ENCODE measurements at regions of chr2 and their contacts with region 1.

Region 1: GRCh38 chr2:64767670-64768468 is 114.2 kb upstream of the SERTAD2 start:
- DNase-seq: peak; percentile 96

Region 2: DNA sequence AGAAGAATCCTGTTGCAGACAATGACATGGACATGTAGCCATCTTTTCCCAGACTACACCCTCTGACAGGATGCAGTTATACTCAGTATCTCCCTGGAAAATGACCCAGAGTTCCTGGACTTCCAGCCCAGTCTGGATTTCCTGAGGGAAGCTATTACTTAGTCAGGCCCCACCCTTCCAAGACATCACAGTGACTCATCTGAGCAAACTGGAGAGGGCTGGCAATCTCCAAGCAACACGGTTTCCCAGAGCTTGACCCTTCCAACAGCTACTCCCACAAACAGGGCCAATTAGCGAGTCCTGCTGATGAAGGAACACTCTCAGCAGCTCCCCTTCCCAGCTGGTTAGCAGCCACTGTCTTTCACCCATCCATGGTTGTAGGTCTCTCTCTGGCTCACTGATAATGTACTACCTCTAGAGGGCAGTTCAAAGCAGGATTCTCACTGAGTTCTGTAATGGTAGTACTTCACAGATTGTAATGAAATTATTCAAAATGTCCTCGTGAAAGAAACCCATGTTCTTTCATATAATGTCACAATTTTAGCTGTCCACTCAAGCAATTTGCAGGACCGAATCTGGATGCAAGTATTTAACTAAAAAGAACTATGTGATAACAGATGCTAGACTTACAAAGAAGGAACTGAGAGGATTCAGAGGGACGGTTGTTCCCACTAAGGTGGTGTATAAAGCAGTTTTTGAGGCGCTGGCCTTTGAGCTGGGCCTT is 1068.9 kb before region 1 on chr2:
- intact Hi-C with region 1: no loop called
- DNase-seq: peak; percentile 91

Region 3: GRCh38 chr2:64859312-64860212 is 91.7 kb after region 1 on chr2:
- intact Hi-C with region 1: loop called (anchors 5 to 10 kb)
- DNase-seq: peak; percentile 95

Region 4: GRCh38 chr2:66252109-66252508 is 1484.2 kb after region 1 on chr2:
- intact Hi-C with region 1: loop called in 1 of 2 experiments (anchors 10 kb)
- DNase-seq: no peak